ENCODE measurements at regions of chr17 and their contacts with region 1.

Region 1: DNA sequence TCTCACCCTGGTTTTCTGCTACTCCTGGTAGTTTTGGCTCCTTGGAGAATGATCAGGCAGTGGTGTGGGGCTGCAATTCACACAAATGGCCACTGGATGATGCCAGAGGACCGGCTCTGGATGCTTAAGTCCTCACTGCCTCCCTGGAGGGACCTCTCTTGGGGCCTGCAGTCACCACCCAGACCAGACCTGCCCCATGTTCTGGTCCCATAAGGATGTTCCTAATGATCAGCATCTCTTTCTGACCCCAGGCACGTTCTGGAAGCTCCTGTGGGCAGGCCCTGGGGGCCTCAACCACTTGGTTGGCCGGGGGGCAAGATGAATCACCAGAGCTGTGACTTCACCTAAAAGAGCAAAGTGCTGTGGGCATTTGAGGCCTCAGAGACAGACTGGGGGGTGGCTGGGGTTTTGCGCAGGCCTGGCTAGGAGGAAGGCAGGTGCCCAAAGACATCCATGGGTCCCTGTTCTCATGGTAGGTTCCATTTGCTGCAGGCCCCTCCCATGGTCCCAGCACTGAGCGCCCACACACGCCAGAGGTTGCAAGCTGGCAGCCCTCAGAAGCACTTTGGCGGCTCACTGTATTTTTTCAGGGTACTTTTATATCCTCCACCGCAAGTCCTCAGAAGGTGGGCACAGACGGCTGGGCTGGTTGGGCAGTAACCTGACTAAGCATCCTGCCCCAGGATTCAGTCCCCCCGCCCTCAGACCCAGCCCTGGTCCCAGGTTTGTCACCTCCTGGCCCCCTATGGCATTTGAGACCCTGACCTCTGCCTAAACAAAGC is 53.2 kb downstream of the NT5M start:
- DNase-seq: peak; percentile 64
- H3K4me3 ChIP-seq: no peak overlapping the region
- H3K27ac ChIP-seq: no peak overlapping the region
- H3K4me1 ChIP-seq: no peaks in the 10 kb centered on the region
- H3K27me3 ChIP-seq: no peaks in the 10 kb centered on the region
- CTCF ChIP-seq: peak; percentile 100

Region 2: GRCh38 chr17:17269926-17270773 is 86.2 kb before region 1 on chr17:
- CTCF ChIA-PET with region 1: no interaction called
- dilution Hi-C with region 1: loop called (anchors 5 kb)
- in situ Hi-C with region 1: no loop called
- intact Hi-C with region 1: no loop called
- DNase-seq: no peak
- H3K4me3 ChIP-seq: no peak overlapping the region
- H3K27ac ChIP-seq: no peak overlapping the region
- H3K4me1 ChIP-seq: no peaks in the 10 kb centered on the region
- H3K27me3 ChIP-seq: no peaks in the 10 kb centered on the region
- CTCF ChIP-seq: peak; percentile 17 to 37

Region 3: DNA sequence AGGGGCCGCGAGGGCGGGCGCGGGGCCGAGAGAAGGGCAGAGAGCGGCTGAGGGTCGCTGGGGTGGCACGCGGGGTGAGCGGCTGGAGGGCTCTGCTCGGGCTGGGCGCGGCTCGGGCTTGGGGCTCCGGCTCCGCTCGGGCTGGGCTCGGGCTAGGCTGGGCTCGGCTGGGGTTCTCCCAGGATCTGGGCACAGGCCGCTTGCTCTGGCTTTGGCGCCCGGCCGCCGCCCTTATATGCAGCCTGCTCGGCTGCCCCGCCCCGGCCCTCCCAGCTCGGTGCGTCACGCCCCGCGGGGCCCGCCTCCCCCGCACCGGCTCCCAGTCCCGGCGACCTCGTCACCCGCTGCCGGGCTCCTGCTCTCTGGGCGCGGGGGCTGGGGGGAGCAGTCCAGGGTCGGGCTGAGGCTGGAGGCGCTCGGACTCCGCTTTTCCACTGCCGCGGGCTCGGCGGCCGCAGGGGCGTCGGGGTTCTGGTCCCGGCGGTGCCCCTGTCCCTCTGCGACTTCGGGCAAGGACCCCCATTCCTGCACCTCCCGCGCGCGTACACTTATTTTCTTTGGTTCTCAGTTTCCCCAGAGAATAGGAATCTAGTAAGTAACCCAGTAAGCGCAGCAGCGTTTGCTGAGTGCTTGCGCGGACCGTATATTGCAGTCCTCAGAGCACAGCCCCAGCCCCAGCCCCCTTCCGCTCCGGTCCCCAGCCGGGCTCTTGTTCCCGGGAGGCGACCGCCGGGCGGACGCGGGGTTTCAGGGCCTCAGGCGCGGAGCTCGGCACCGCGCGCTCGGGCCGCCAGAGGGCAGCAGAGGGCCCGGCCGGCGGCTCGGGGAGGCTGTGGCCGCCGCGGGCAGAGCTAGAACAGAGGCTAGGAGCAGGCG is 140.1 kb after region 1 on chr17 and contains the start of gene RASD1:
- CTCF ChIA-PET with region 1: no interaction called
- dilution Hi-C with region 1: no loop called
- in situ Hi-C with region 1: loop called in 1 of 2 experiments (anchors 5 kb)
- intact Hi-C with region 1: loop called (anchors 1 kb)
- DNase-seq: peak; percentile 81
- H3K4me3 ChIP-seq: peak within 1 kb of the TSS; percentile 57 to 69 (median 57)
- H3K27ac ChIP-seq: no peak within 1 kb of the TSS
- H3K4me1 ChIP-seq: peaks cover 10% of the 10 kb centered on the region
- H3K27me3 ChIP-seq: peaks cover 5% of the 10 kb centered on the region
- CTCF ChIP-seq: peak; percentile 60 to 68
- total RNA-seq, gene RASD1: 1.8 TPM in 1 of 2 donors, not detected in the other

Region 4: DNA sequence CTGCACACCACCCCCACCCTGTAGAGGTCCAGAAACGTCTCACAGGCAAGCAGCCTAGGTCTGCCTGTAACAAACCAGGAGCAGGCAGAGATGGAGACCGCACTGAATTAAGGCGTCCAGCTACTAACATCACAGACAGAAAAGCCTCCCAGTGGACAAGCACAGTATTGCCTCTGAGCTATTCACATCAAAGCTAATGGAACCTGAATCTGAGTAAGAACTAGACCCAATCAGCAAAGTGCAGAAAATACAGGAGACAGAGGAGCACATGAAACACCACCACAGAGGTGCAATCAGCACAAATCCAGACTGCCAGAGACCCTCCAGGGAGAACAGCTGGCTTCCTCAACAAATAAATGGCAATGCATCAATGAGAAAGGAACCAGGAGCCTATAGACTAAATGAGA is 257.4 kb after region 1 on chr17:
- CTCF ChIA-PET with region 1: no interaction called
- dilution Hi-C with region 1: no loop called
- in situ Hi-C with region 1: no loop called
- intact Hi-C with region 1: loop called (anchors 1 kb)
- DNase-seq: peak; percentile 62
- H3K4me3 ChIP-seq: no peak overlapping the region
- H3K27ac ChIP-seq: no peak overlapping the region
- H3K4me1 ChIP-seq: no peaks in the 10 kb centered on the region
- H3K27me3 ChIP-seq: no peaks in the 10 kb centered on the region
- CTCF ChIP-seq: peak; percentile 78 to 90

Region 5: DNA sequence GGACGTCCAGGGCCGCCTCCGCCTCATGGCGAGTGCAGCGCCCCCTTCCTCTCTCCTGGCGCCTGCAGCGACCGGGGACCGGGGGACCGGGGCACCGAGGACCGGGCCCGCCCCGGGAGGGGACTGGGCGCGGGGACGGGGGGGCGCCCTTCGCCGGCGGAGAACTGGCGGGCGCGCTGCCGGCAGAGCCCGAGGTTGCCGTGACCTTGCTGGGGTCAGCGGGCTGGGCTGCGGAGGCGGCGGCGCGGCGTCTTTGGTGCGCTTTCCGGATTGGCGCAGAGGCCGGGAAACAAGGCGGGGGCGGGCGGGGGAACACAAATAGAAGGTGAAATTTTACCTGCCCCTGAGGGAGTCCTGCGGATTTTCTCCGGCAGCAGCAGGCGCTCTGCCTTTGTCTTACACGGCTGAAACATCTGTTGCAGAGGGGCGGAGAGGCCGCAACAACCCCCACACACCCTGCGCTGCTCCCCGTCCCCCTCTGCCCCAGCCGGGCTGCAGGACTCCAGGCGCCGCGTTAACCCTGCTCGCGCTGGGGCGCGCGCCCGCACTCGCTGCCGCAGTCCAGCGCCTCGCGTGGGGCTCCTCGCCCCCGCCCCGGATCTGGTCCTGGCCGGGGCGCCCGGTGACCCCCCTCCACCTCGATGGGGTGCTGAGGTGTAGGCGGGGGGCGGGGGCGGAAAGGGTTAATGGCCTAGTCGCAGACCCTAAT is 426.9 kb after region 1 on chr17:
- CTCF ChIA-PET with region 1: no interaction called
- dilution Hi-C with region 1: no loop called
- in situ Hi-C with region 1: loop called in 1 of 2 experiments (anchors 25 kb)
- intact Hi-C with region 1: no loop called
- DNase-seq: peak; percentile 50
- H3K4me3 ChIP-seq: peak overlapping the region in 2 of 3 experiments; percentile 30 to 44
- H3K27ac ChIP-seq: no peak overlapping the region
- H3K4me1 ChIP-seq: peaks cover 48% of the 10 kb centered on the region
- H3K27me3 ChIP-seq: no peaks in the 10 kb centered on the region
- CTCF ChIP-seq: peak in 1 of 2 donors; percentile 24

Region 6: DNA sequence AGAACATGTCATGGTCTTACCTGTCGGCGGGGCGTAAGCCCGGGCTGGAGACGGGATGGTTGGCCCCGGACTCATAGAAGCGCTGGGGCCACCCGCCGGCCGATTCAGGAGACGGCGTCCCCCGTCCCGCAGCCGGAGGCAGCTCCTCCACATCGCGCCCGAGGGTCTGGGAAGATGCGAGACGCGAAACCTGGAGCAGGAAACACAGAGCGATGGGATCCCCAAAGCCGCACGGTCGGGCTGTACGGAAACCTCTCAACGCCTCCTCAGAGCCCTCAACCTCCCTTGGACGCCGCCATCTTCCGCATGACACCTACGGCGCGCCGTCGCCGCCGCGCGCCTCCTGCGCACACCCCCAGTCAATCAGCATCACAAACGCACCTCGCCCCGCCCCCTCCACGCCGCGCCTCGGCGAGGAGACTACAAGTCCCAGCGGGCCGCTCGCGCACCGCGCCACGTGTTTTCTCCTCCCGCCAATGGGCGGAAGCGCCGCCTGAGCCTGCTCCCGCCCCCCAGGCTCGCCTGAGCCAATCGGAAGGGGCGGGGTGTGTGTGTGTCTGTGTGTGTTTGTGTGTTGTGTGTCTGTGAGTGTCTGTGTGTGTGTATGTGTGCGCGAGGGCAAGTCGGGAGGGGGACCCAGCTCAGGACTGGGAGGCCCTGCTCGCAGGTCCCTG is 682.7 kb after region 1 on chr17 and contains the starts of genes ATPAF2 and GID4:
- CTCF ChIA-PET with region 1: no interaction called
- dilution Hi-C with region 1: no loop called
- in situ Hi-C with region 1: no loop called
- intact Hi-C with region 1: loop called (anchors 5 kb)
- DNase-seq: peak; percentile 99
- H3K4me3 ChIP-seq: peak within 1 kb of the TSS; percentile 88 to 90 (median 89)
- H3K27ac ChIP-seq: peak within 1 kb of the TSS; percentile 65
- H3K4me1 ChIP-seq: peaks cover 24% of the 10 kb centered on the region
- H3K27me3 ChIP-seq: no peaks in the 10 kb centered on the region
- CTCF ChIP-seq: peak in 1 of 2 donors; percentile 32
- total RNA-seq, gene ATPAF2: 17.0 to 23.5 TPM
- total RNA-seq, gene GID4: 11.2 to 16.4 TPM

Measured in mammary epithelial cell (primary cell).